ENCODE measurements at regions of chr10 and their contacts with region 1.

Region 1: DNA sequence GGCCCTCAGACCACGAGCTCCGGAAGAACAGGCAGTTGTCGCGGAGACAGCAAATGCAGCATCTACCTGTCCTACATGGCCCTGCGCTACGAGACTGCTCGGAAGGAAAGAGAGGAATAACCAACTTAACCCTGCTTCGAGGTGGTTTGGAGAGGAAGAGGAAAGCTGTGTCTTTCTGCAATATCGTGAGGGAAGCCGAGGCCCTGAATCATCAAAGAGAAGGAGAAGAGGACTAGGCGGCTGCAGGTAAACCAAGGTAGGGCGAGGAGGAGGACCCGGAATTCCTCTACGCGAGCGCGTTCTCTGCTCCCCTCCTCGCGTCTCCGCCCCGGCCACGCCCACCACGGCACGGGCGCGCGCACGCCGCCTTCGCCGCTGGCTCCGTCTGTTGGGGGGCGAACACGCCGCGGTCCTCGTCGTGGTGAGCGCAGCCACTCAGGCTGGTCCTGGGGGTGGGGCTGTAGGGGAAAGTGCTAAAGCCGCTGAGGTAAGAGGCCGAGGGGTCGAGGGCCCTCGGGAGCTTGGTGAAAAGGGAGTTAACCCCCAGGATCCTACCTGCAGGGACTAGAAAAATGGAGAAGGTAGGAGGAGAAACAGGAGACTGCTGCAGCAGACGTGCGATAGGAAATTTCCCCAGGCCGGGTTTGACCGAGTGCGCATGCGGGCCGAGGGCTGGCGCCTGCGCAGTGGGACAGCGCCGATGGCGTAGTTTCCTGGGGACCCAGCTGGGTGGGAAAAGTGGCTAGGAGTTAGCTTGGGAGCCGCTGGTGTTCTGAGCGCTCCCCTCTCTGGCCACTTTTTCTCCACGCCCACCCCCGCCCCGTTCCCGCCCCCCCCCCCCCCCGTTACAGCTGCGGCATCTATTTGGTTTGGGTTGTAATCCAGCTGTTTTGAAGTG is at the starts of genes ANAPC16 and ASCC1:
- DNase-seq: peak; percentile 98
- ATAC-seq: peak; percentile 83
- H3K4me3 Mint-ChIP-seq: peak within 1 kb of the TSS; percentile 96
- H3K27ac Mint-ChIP-seq: peak within 1 kb of the TSS; percentile 99
- H3K4me1 Mint-ChIP-seq: peaks cover 62% of the 10 kb centered on the region
- H3K27me3 Mint-ChIP-seq: no peaks in the 10 kb centered on the region
- CTCF ChIP-seq: no peak
- total RNA-seq, gene ANAPC16: 128 and 137 TPM in 2 replicates
- total RNA-seq, gene ASCC1: 42.6 and 42.9 TPM in 2 replicates

Region 2: DNA sequence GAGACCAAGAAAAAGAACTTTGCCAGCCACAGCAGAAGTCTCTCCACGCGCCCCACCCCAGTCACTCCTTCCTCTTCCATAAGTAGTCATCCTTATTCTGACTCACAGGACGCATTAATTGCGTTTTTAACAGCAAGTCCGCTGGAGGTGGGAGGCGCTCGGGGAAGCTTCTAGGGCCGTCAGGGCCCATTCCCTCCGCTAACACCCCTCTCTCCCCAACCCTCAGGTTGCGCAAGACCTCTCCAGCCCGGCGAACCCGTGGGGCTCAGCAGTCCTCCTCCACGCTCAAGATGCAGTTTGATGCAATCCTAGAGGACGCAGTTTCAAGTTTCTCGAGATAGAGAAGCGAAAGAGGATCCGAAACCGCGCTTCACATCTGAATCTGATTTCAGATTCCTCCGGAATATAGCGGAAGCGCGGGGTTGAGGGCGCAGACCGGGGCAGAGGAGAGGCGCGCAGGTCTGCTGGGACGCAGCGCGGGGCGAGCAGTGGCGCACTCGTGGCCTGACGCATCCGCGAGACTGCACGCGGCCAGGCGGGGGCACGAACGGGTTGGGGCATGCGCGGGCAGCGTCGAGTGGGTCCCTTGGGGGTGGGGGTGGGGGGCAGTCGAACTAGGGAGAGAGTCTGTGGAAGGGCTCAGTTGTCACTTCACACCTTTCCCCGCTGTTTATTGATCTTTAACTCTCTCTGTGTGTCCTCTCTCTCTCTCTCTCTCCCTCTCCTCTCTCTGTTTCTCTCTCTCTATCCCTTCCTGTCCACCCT is 327.1 kb before region 1 on chr10:
- CTCF ChIA-PET with region 1: no interaction called
- POLR2A ChIA-PET with region 1: no interaction called
- intact Hi-C with region 1: loop called (anchors 2 kb)
- DNase-seq: peak; percentile 82
- ATAC-seq: peak; percentile 94
- H3K4me3 Mint-ChIP-seq: peak overlapping the region; percentile 87
- H3K27ac Mint-ChIP-seq: peak overlapping the region; percentile 92
- H3K4me1 Mint-ChIP-seq: peaks cover 39% of the 10 kb centered on the region
- H3K27me3 Mint-ChIP-seq: no peaks in the 10 kb centered on the region
- CTCF ChIP-seq: no peak

Region 3: GRCh38 chr10:72162978-72163377 is 52.9 kb before region 1 on chr10:
- CTCF ChIA-PET with region 1: no interaction called
- POLR2A ChIA-PET with region 1: no interaction called
- intact Hi-C with region 1: no loop called
- DNase-seq: no peak
- ATAC-seq: peak; percentile 28
- H3K4me3 Mint-ChIP-seq: no peak overlapping the region
- H3K27ac Mint-ChIP-seq: no peak overlapping the region
- H3K4me1 Mint-ChIP-seq: peaks cover 5% of the 10 kb centered on the region
- H3K27me3 Mint-ChIP-seq: no peaks in the 10 kb centered on the region
- CTCF ChIP-seq: no peak

Region 4: DNA sequence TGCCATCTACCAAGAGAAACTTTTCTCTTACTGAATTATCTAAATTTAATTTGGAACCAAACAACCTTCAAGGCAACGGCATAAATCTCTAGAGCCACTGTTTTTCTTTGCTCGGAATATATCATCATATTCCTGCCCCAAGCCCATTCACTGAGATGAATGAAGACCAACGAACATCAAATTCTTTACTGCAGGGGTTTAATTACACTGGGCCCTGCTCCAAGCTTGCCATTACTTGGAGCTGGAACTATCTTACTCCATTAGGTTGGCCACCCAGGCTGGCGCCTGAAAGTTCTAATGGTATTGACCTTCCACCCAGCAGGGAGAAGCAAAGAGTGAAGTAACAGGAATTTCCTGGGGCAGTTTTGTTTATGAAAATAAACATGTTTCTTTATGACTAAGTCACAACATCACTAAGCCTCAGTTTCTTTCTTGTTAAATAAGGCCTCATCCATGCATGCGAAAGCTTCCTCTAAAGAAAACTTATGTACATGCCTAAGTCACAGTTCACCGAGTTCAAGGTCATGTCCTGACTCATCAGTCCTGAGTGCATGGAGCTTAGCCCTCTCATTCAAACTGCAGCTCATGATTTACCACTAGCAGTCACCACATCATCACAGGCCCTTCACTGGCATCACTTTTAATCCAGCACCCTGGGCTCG is 42.1 kb before region 1 on chr10:
- CTCF ChIA-PET with region 1: no interaction called
- POLR2A ChIA-PET with region 1: interaction called, 8 read pairs
- intact Hi-C with region 1: loop called (anchors 5 kb)
- DNase-seq: no peak
- ATAC-seq: peak; percentile 92
- H3K4me3 Mint-ChIP-seq: no peak overlapping the region
- H3K27ac Mint-ChIP-seq: peak overlapping the region; percentile 22
- H3K4me1 Mint-ChIP-seq: peaks cover 15% of the 10 kb centered on the region
- H3K27me3 Mint-ChIP-seq: no peaks in the 10 kb centered on the region
- CTCF ChIP-seq: no peak

Region 5: DNA sequence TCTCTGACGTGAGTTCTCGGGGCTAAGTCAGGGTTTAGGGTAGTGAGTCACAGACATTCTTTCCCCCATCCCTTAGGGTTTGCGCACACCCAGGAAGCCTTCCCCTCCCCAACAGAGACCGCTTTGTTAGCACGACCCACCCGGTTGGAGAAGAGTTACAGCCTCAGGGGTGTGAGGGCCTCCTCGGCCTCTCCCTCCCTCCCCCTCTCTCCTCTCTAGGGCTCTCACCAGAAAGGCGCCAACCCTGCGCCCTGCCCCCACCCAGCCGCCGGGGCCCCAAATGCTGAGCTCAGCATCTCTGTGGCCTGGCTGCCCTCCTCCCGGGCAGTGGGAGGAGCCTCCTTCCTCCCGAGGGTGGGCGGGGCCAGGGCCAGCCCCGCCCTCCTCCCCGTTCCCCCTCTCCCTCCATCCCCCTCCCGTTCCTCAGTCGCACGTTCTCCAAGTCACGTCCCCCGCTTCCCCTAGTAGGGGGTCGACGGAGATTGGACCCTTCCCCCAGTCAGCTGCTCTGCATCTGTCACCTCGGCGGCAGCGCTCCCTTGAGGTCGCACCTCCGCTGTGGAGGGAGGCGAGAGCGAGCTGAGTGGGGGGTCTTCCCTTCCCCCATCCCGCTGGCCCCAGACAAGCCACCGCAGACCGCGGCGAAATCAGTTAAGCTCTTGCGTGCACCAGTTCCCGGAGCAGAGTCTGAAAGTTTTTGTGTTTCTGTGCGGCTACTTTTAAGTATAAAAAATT is 44.9 kb after region 1 on chr10:
- CTCF ChIA-PET with region 1: interaction called, 4 read pairs
- POLR2A ChIA-PET with region 1: interaction called, 41 read pairs
- intact Hi-C with region 1: no loop called
- DNase-seq: peak; percentile 70
- ATAC-seq: peak; percentile 71
- H3K4me3 Mint-ChIP-seq: peak overlapping the region; percentile 91
- H3K27ac Mint-ChIP-seq: peak overlapping the region; percentile 96
- H3K4me1 Mint-ChIP-seq: peaks cover 58% of the 10 kb centered on the region
- H3K27me3 Mint-ChIP-seq: no peaks in the 10 kb centered on the region
- CTCF ChIP-seq: no peak

Region 6: GRCh38 chr10:72319416-72320254 is 103.7 kb after region 1 on chr10:
- CTCF ChIA-PET with region 1: interaction called, 9 read pairs
- POLR2A ChIA-PET with region 1: interaction called, 234 read pairs
- intact Hi-C with region 1: loop called (anchors 1 kb)
- DNase-seq: peak; percentile 87
- ATAC-seq: peak; percentile 52
- H3K4me3 Mint-ChIP-seq: peak overlapping the region; percentile 81
- H3K27ac Mint-ChIP-seq: peak overlapping the region; percentile 98
- H3K4me1 Mint-ChIP-seq: peaks cover 86% of the 10 kb centered on the region
- H3K27me3 Mint-ChIP-seq: no peaks in the 10 kb centered on the region
- CTCF ChIP-seq: no peak

Region 7: GRCh38 chr10:72542396-72542815 is 326.5 kb after region 1 on chr10:
- CTCF ChIA-PET with region 1: no interaction called
- POLR2A ChIA-PET with region 1: no interaction called
- intact Hi-C with region 1: no loop called
- DNase-seq: no peak
- ATAC-seq: no peak
- H3K4me3 Mint-ChIP-seq: no peak overlapping the region
- H3K27ac Mint-ChIP-seq: no peak overlapping the region
- H3K4me1 Mint-ChIP-seq: peaks cover 24% of the 10 kb centered on the region
- H3K27me3 Mint-ChIP-seq: no peaks in the 10 kb centered on the region
- CTCF ChIP-seq: no peak

Region 8: DNA sequence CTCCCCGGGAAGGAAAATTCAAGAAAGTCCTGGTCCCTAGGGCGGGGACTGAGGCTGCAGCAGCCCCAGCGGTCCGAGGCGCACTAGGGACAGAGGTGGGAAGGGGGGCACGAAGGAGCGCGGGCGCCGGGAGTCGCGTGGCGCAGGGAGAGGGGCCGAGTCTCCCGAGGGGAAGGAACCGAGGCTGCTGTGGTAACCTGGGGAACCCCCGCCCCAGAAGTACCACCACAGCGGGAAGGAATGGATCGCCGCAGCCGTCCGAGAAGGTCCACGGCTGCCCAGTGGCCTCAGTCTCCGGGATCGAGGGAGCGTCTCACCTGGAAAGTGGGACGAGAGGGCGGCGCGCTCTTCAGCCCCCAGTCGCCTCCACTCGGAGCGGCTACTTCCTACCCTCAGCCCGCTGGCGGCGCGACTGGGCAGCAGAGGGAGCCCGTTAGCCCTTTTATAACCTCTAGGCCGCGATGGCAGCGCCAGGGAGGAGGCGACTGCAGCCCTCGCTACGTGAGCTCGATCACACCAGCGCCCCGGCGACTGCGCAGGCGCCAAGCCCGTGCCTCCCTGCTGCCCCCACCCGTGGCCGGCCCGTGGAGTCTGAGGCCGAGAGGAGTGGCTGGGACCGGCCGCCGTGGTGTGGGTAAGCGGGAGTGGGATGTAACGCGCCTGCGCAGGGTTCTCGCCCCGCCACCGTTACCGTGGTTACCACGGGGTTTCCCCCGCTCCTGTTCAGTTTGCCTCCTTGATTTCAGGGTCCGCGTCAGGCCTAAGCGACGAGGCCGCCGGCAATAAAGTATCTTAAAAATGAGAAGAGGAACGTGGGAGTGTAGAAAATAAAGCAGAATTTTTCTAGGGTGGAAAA is 880.8 kb after region 1 on chr10 and contains the start of gene P4HA1:
- CTCF ChIA-PET with region 1: no interaction called
- POLR2A ChIA-PET with region 1: no interaction called
- intact Hi-C with region 1: loop called (anchors 5 kb)
- DNase-seq: peak; percentile 95
- ATAC-seq: peak; percentile 92
- H3K4me3 Mint-ChIP-seq: peak within 1 kb of the TSS; percentile 96
- H3K27ac Mint-ChIP-seq: peak within 1 kb of the TSS; percentile 88
- H3K4me1 Mint-ChIP-seq: peaks cover 30% of the 10 kb centered on the region
- H3K27me3 Mint-ChIP-seq: no peaks in the 10 kb centered on the region
- CTCF ChIP-seq: peak; percentile 23
- total RNA-seq, gene P4HA1: 19.8 and 20.5 TPM in 2 replicates